GM10248 (cell line): ENCODE measurements at regions of chr2 and their contacts with region 1.

Region 1: DNA sequence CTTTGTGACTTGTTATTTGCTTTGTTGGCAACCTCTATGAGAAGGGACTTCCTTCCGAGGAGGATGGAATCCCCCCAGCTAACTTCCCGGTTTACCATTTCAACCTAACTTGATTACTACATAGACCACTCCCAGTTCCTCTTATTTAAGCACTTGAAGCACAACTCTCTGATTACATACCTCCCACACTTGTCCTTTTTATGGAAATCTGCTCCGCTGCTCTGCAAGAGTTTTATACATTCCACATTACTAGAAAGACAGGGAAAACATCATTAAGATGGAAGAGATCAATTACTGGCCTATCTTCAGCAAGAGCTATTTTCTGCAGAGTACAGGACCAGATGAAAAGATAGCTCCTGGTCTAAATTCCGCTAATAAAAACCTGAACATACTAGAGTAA is 160.0 kb upstream of the PGAP1 start:
- DNase-seq: peak; percentile 12
- CTCF ChIP-seq: no peak

Region 2: GRCh38 chr2:197075759-197076337 is 10.7 kb before region 1 on chr2:
- CTCF ChIA-PET with region 1: interaction called, 11 read pairs
- POLR2A ChIA-PET with region 1: no interaction called
- DNase-seq: no peak
- CTCF ChIP-seq: no peak

Region 3: GRCh38 chr2:197097578-197098366 is 11.3 kb after region 1 on chr2:
- CTCF ChIA-PET with region 1: interaction called, 10 read pairs
- POLR2A ChIA-PET with region 1: no interaction called
- DNase-seq: no peak
- CTCF ChIP-seq: no peak